CD8-positive, alpha-beta T cell (primary cell): ENCODE measurements at regions of chr5 and their contacts with region 1.

Region 1: DNA sequence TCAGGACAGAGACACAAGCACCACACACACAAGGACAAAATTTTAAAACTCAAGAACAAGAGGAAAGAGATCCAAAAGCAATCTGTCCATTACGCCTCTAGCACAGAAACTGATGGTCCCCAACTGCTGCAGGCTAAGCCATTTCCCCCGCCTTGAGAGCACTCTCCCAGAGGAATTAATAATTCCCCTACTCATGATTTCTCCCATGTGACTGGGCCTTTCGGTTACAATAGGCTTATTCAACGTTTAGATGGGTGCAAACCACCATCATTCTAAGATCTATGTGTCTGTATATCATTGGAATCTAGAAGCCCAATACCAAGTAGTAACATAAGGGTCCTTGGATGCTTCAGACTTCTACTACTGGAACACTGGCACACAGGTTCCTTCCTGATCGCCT is 18.8 kb downstream of the BRD8 start:
- DNase-seq: no peak
- ATAC-seq: no peak
- H3K4me3 ChIP-seq: no peak overlapping the region
- H3K4me3 Mint-ChIP-seq: no peak overlapping the region
- H3K27ac ChIP-seq: no peak overlapping the region
- H3K27ac Mint-ChIP-seq: no peak overlapping the region
- H3K4me1 ChIP-seq: no peaks in the 10 kb centered on the region
- H3K4me1 Mint-ChIP-seq: no peaks in the 10 kb centered on the region
- H3K27me3 ChIP-seq: no peaks in the 10 kb centered on the region
- H3K27me3 Mint-ChIP-seq: no peaks in the 10 kb centered on the region
- CTCF ChIP-seq: no peak

Region 2: DNA sequence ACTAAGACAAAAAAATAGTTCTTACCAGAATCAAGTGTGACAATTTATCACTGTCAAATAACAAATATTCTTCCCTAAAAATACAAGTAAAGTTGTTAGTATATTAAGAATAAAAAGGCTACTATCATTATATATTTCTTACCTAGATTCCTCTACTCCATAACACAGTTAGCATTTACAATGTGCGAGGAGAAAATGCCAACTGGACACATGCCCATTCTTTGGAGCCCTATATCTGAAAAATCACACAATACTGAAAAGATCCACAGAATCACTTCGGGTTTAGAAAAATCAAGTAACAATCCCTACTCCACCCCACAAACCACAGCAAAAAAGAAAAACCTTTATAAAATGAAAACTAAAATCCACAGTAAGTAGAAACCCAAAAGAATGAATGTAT is 199.5 kb before region 1 on chr5:
- CTCF ChIA-PET with region 1: no interaction called
- POLR2A ChIA-PET with region 1: no interaction called
- intact Hi-C with region 1: loop called in 1 of 2 experiments (anchors 10 kb)
- DNase-seq: no peak
- ATAC-seq: no peak
- H3K4me3 ChIP-seq: no peak overlapping the region
- H3K4me3 Mint-ChIP-seq: no peak overlapping the region
- H3K27ac ChIP-seq: no peak overlapping the region
- H3K27ac Mint-ChIP-seq: peak overlapping the region; percentile 9
- H3K4me1 ChIP-seq: no peaks in the 10 kb centered on the region
- H3K4me1 Mint-ChIP-seq: peaks cover 9% of the 10 kb centered on the region
- H3K27me3 ChIP-seq: no peaks in the 10 kb centered on the region
- H3K27me3 Mint-ChIP-seq: no peaks in the 10 kb centered on the region
- CTCF ChIP-seq: no peak